ENCODE measurements at regions of chr6 and their contacts with region 1.

Region 1: GRCh38 chr6:17354700-17355403 is 38.5 kb upstream of the CAP2 start:
- DNase-seq: peak; percentile 83
- H3K4me3 ChIP-seq: no peak overlapping the region
- CTCF ChIP-seq: no peak

Region 2: GRCh38 chr6:17442196-17442595 is 87.3 kb after region 1 on chr6:
- in situ Hi-C with region 1: loop called (anchors 5 kb)
- DNase-seq: no peak
- H3K4me3 ChIP-seq: no peak overlapping the region
- CTCF ChIP-seq: no peak